Lower leg skin (tissue), 4 donors: ENCODE measurements at regions of chr7 and their contacts with region 1.

Region 1: DNA sequence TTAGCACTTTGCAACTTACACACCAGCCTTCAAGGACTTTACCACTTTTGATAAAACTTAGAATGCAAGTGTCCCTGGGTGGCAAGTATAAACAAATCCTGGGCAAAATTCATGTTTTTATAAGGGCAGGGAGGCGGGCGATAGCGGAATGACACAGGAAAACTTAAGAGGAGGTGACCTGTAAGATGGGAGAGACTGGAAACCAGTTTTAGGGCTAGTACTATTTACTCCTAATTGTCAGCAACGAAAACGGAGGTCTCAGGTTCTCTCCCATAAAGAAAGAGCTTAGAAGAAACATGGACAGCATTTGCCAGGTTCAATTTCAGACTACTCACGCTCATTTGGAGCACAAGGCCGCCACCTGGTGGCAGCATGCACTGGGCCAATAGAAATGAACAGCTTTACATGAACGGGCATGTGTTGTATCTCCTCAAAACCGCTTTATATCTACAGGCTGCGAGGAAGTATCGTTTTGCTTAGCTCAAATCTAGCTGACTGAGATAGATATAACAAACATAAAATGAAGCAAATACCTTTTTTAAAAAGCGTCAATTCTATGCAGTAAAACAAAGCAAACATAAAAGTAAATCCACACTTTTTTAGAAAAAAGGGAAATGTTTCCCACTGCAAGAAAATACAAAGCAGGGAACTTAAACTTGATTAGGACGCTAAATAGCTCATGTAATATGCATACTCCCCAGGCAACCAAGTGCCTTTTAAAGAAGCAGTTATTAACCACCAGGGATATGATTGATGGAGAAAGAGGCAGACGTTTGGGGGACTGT is 37.6 kb upstream of the SVOPL start:
- DNase-seq: peak; percentile 77 to 95
- H3K4me3 ChIP-seq: no peak overlapping the region
- CTCF ChIP-seq: no peak
- POLR2A ChIP-seq: no peak

Region 2: GRCh38 chr7:137898839-137899721 is 839.7 kb before region 1 on chr7:
- intact Hi-C with region 1: loop called (anchors 10 kb)
- DNase-seq: peak; percentile 73 to 95
- H3K4me3 ChIP-seq: no peak overlapping the region
- CTCF ChIP-seq: peak in 1 of 3 donors; percentile 84
- POLR2A ChIP-seq: no peak

Region 3: DNA sequence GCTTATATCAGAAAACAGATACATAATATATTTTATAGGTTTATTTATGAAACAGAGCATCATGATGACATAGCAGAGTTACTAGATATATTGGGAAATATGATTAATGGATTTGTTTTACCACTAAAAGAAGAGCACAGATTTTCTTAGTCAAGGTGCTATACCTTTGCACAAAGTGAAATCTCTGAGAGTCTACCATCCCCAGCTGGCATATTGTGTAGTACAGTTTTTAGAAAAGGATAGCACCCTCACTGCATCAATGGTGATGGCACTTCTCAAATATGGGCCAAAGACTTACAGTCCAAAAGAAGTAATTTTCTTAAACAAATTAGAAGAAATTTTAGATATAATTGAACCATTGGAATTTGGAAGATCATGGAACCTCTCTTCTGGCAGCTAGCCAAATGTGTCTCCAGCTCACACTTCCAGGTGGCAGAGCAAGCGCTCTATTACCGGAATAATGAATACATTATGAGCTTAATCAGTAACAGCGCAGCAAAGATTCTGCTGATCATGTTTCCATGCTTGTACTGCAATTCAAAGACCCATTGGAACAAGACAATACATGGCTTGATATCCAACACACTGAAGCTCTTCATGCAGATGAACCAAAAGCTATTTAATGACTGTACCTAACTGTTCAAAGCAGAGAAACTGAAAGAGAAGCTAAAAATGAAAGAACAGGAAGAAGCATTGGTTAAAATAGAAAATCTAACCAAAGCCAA is 715.0 kb before region 1 on chr7:
- intact Hi-C with region 1: loop called (anchors 10 kb)
- DNase-seq: no peak
- H3K4me3 ChIP-seq: no peak overlapping the region
- CTCF ChIP-seq: no peak
- POLR2A ChIP-seq: no peak

Region 4: GRCh38 chr7:138663725-138664710 is 74.7 kb before region 1 on chr7:
- intact Hi-C with region 1: no loop called
- DNase-seq: no peak
- H3K4me3 ChIP-seq: peak overlapping the region; percentile 34
- CTCF ChIP-seq: no peak
- POLR2A ChIP-seq: no peak